HepG2 (cell line): ENCODE measurements at regions of chr13 and their contacts with region 1.

Region 1: GRCh38 chr13:75687150-75687763 is 51.1 kb downstream of the LMO7 start:
- DNase-seq: peak; percentile 46
- ATAC-seq: peak; percentile 89
- H3K4me3 ChIP-seq: no peak overlapping the region
- H3K27ac ChIP-seq: no peak overlapping the region
- H3K4me1 ChIP-seq: peaks cover 19% of the 10 kb centered on the region
- H3K27me3 ChIP-seq: no peaks in the 10 kb centered on the region
- CTCF ChIP-seq: peak; percentile 61
- EP300 ChIP-seq: no peak
- POLR2A ChIP-seq: no peak
- RAD21 ChIP-seq: 0 out of 2 replicates have a peak, but pooled peaks have one; percentile 20

Region 2: DNA sequence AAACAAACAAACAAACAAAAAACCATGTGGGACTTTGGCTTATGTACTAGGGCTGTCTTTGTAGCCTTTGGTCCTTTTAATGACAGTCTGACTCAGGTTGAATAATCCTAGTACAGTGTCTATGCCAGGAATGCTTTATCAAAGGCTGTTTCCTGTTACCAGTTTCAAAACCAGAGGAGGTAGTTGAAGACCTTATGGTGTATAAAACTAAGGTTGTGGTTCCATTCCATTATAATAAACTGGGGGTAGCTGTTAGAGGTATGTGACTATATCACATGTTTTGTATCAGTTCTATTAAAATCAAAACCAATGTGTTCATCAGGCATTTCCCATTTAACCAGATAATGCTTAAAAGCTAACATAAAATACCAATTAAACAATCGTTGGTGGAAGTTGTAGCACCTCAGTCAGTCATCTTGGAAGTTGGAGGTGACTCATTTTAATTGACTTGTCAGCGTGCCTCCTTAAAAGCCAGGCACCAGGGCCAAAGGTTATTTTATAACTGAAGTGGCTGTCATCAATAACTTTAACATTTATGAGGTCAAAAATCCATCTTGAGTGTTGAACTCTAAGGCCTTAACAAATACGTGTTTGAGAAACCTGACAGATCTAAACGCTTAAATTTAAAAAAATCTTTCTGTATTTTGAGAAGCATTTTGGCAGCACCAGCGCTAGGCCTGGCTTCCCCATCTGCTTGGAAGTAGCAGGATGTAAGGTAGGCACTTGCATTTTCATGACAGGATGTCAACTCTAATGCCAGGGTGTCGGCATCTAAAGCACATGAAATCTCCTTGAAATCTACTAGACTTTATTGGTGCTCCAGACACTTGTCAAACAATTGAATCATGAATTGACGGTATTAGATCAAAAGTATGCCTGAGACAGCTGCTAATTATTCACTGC is 111.3 kb after region 1 on chr13:
- CTCF ChIA-PET with region 1: no interaction called
- POLR2A ChIA-PET with region 1: no interaction called
- in situ Hi-C with region 1: loop called (anchors 10 kb)
- intact Hi-C with region 1: no loop called
- DNase-seq: no peak
- ATAC-seq: peak; percentile 49; the same call in 2 of the 3 replicates
- H3K4me3 ChIP-seq: no peak overlapping the region
- H3K27ac ChIP-seq: no peak overlapping the region
- H3K4me1 ChIP-seq: peaks cover 36% of the 10 kb centered on the region
- H3K27me3 ChIP-seq: no peaks in the 10 kb centered on the region
- CTCF ChIP-seq: no peak
- EP300 ChIP-seq: no peak
- POLR2A ChIP-seq: no peak
- RAD21 ChIP-seq: no peak

Region 3: GRCh38 chr13:75828851-75829250 is 141.6 kb after region 1 on chr13:
- CTCF ChIA-PET with region 1: no interaction called
- POLR2A ChIA-PET with region 1: no interaction called
- in situ Hi-C with region 1: no loop called
- intact Hi-C with region 1: loop called (anchors 5 kb)
- DNase-seq: no peak
- ATAC-seq: no peak
- H3K4me3 ChIP-seq: no peak overlapping the region
- H3K27ac ChIP-seq: no peak overlapping the region
- H3K4me1 ChIP-seq: no peaks in the 10 kb centered on the region
- H3K27me3 ChIP-seq: no peaks in the 10 kb centered on the region
- CTCF ChIP-seq: no peak
- EP300 ChIP-seq: no peak
- POLR2A ChIP-seq: no peak
- RAD21 ChIP-seq: no peak

Region 4: DNA sequence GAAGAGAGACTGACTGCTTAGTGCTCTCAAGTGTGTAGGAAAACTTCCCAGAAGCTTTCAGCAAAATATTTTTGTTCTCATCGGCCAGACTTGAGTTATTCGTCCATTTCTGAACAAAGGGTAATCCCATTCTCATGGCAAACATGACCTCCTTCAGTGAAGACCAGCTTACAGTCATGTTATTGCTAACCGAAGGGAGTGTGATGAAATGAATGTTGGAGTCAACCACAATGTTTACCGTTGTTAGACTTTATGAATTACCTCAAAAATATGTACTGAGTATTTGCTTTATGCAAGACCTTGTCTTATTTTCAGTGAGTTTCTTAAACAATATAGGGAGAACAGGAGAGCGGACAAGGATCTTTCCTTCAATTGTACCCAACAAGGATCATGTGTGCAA is 177.5 kb after region 1 on chr13:
- CTCF ChIA-PET with region 1: no interaction called
- POLR2A ChIA-PET with region 1: no interaction called
- in situ Hi-C with region 1: loop called (anchors 10 kb)
- intact Hi-C with region 1: no loop called
- DNase-seq: peak; percentile 35
- ATAC-seq: peak; percentile 22; the same call in 2 of the 3 replicates
- H3K4me3 ChIP-seq: no peak overlapping the region
- H3K27ac ChIP-seq: no peak overlapping the region
- H3K4me1 ChIP-seq: peaks cover 12% of the 10 kb centered on the region; the same call in 1 of the 2 replicates
- H3K27me3 ChIP-seq: no peaks in the 10 kb centered on the region
- CTCF ChIP-seq: no peak
- EP300 ChIP-seq: no peak
- POLR2A ChIP-seq: no peak
- RAD21 ChIP-seq: no peak

Region 5: DNA sequence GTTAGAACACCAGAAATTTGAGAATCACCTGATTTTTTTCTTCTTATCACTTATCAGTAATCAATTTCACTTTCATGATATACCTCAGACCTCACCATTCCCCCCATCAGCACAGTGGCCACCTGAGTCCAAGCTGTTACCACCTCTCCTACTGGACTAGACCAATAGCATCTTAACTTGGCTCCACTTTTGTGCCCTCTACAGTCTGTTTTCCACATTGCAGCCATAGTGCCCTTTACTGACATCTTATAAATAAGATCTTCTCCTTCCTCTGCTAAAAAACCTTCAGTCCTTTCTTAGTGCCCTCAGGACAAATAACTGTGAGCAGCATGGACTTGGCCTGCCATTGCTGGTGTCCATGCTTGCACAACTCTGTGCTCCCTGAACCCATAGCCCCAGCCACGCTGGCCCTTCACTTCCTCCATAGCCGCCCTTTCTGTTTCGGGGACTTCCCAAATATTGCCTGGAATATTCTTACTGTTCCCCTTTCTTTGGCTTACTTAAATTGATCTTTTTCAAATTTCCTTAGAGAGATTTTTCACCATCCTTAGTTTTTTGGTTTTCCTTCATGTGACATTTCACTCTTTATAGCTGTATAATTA is 329.6 kb after region 1 on chr13:
- CTCF ChIA-PET with region 1: no interaction called
- POLR2A ChIA-PET with region 1: no interaction called
- in situ Hi-C with region 1: no loop called
- intact Hi-C with region 1: loop called (anchors 2 kb)
- DNase-seq: peak; percentile 25
- ATAC-seq: peak; percentile 53
- H3K4me3 ChIP-seq: no peak overlapping the region
- H3K27ac ChIP-seq: no peak overlapping the region
- H3K4me1 ChIP-seq: 0 out of 2 replicates have a peak, but pooled peaks cover 6% of the 10 kb centered on the region
- H3K27me3 ChIP-seq: no peaks in the 10 kb centered on the region
- CTCF ChIP-seq: 0 out of 2 replicates have a peak, but pooled peaks have one; percentile 27
- EP300 ChIP-seq: no peak
- POLR2A ChIP-seq: no peak
- RAD21 ChIP-seq: no peak